T-cell (primary cell): ENCODE measurements at regions of chr3 and their contacts with region 1.

Region 1: DNA sequence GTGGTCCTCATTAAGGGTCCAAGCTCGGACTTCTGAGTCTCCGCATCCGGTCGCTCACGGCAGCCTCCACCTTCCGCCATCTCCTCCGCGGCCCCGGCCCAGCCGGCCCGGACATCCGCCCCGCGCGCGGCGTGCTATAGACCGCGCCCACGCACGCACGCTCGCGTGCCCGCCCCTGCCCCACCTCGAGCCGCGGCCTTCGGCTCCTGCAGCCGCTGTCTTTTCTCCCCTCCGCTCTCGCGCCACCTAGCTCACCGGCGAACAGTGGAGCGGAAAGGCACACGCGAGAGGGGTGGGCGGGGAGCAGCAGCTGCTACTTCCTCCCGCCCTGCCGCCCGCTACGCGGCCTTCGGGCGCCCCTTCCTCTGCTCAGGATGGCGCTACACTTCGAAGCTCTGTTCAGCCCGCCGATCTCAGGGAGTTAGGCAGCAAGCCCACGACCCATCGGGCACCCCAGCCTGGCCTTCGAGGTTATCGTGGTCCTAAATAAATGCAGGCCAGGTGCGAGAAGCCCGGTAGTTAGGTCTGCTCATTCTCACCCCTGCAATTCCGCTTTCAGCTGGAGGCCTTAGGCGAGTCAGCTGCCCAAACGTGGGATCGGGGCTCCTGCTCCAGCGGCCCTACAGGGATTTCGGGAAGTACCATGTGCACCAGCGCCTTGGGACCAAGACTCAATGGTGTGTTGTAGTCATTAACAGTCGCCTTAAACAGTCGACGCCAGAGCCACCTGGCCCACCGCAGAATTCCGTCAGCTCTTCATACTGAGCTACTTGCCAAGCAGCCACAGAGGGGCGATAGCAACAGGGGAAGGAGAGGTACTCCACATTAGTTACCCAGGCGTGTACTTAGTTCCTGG is at the start of gene USP4:
- DNase-seq: peak; percentile 83 to 96 (median 88)
- ATAC-seq: peak; percentile 89 to 94 (median 93)
- H3K4me3 ChIP-seq: peak within 1 kb of the TSS; percentile 79 to 98
- H3K4me3 Mint-ChIP-seq: peak within 1 kb of the TSS; percentile 92 to 97 (median 95)
- H3K27ac ChIP-seq: peak within 1 kb of the TSS; percentile 96
- H3K27ac Mint-ChIP-seq: peak within 1 kb of the TSS; percentile 97 to 100
- H3K4me1 ChIP-seq: peaks cover 26 to 63% of the 10 kb centered on the region in 2 experiments
- H3K4me1 Mint-ChIP-seq: peaks cover 39 to 50% (median 49%) of the 10 kb centered on the region in 3 donors
- H3K27me3 ChIP-seq: no peaks in the 10 kb centered on the region
- H3K27me3 Mint-ChIP-seq: no peaks in the 10 kb centered on the region
- total RNA-seq, gene USP4: 101 to 107 (median 103) TPM

Region 2: GRCh38 chr3:49351521-49352011 is 11.4 kb after region 1 on chr3:
- CTCF ChIA-PET with region 1: interaction called, 4 to 11 read pairs
- POLR2A ChIA-PET with region 1: no interaction called
- DNase-seq: no peak
- ATAC-seq: no peak
- H3K4me3 ChIP-seq: no peak overlapping the region
- H3K4me3 Mint-ChIP-seq: no peak overlapping the region
- H3K27ac ChIP-seq: no peak overlapping the region
- H3K27ac Mint-ChIP-seq: peak overlapping the region; percentile 40 to 53
- H3K4me1 ChIP-seq: peaks cover 3 to 15% of the 10 kb centered on the region in 2 experiments
- H3K4me1 Mint-ChIP-seq: peaks cover 13 to 29% (median 18%) of the 10 kb centered on the region in 3 donors
- H3K27me3 ChIP-seq: no peaks in the 10 kb centered on the region
- H3K27me3 Mint-ChIP-seq: no peaks in the 10 kb centered on the region

Region 3: GRCh38 chr3:49411968-49412631 is 71.9 kb after region 1 on chr3 and contains the starts of genes RHOA and TCTA:
- CTCF ChIA-PET with region 1: interaction called, 7 to 29 read pairs
- POLR2A ChIA-PET with region 1: interaction called, 5 to 10 read pairs
- DNase-seq: peak; percentile 95 to 100 (median 99)
- ATAC-seq: peak; percentile 86 to 90 (median 88)
- H3K4me3 ChIP-seq: peak within 1 kb of the TSS; percentile 85 to 94
- H3K4me3 Mint-ChIP-seq: peak within 1 kb of the TSS; percentile 88 to 94 (median 91)
- H3K27ac ChIP-seq: peak within 1 kb of the TSS; percentile 95
- H3K27ac Mint-ChIP-seq: peak within 1 kb of the TSS; percentile 95 to 96
- H3K4me1 ChIP-seq: peaks cover 45 to 75% of the 10 kb centered on the region in 2 experiments
- H3K4me1 Mint-ChIP-seq: peaks cover 71 to 79% (median 73%) of the 10 kb centered on the region in 3 donors
- H3K27me3 ChIP-seq: no peaks in the 10 kb centered on the region
- H3K27me3 Mint-ChIP-seq: no peaks in the 10 kb centered on the region
- total RNA-seq, gene RHOA: 247 to 279 (median 269) TPM
- total RNA-seq, gene TCTA: 22.8 to 38.2 (median 34.3) TPM

Region 4: GRCh38 chr3:49445381-49445780 is 105.2 kb after region 1 on chr3:
- CTCF ChIA-PET with region 1: interaction called, 10 to 58 read pairs
- POLR2A ChIA-PET with region 1: interaction called, 5 to 7 read pairs
- DNase-seq: no peak
- ATAC-seq: no peak
- H3K4me3 ChIP-seq: no peak overlapping the region
- H3K4me3 Mint-ChIP-seq: no peak overlapping the region
- H3K27ac ChIP-seq: no peak overlapping the region
- H3K27ac Mint-ChIP-seq: peak overlapping the region; percentile 55 to 87
- H3K4me1 ChIP-seq: peaks cover 4 to 21% of the 10 kb centered on the region in 2 experiments
- H3K4me1 Mint-ChIP-seq: peaks cover 11 to 20% (median 14%) of the 10 kb centered on the region in 3 donors
- H3K27me3 ChIP-seq: no peaks in the 10 kb centered on the region
- H3K27me3 Mint-ChIP-seq: no peaks in the 10 kb centered on the region

Region 5: GRCh38 chr3:49469936-49470713 is 130.0 kb after region 1 on chr3 and contains the start of gene DAG1:
- CTCF ChIA-PET with region 1: interaction called in 1 of 2 experiments, 34 read pairs
- POLR2A ChIA-PET with region 1: interaction called in 1 of 2 experiments, 3 read pairs
- DNase-seq: peak; percentile 88 to 98 (median 94)
- ATAC-seq: peak; percentile 88 to 89 (median 88)
- H3K4me3 ChIP-seq: peak within 1 kb of the TSS; percentile 91 to 92
- H3K4me3 Mint-ChIP-seq: peak within 1 kb of the TSS; percentile 83 to 88 (median 86)
- H3K27ac ChIP-seq: peak within 1 kb of the TSS; percentile 86
- H3K27ac Mint-ChIP-seq: peak within 1 kb of the TSS; percentile 91 to 94
- H3K4me1 ChIP-seq: peaks cover 19 to 24% of the 10 kb centered on the region in 2 experiments
- H3K4me1 Mint-ChIP-seq: peaks cover 23 to 29% (median 26%) of the 10 kb centered on the region in 3 donors
- H3K27me3 ChIP-seq: no peaks in the 10 kb centered on the region
- H3K27me3 Mint-ChIP-seq: no peaks in the 10 kb centered on the region
- total RNA-seq, gene DAG1: 16.5 to 19.4 (median 18.1) TPM